ENCODE measurements at regions of chr1 and their contacts with region 1.

Region 1: DNA sequence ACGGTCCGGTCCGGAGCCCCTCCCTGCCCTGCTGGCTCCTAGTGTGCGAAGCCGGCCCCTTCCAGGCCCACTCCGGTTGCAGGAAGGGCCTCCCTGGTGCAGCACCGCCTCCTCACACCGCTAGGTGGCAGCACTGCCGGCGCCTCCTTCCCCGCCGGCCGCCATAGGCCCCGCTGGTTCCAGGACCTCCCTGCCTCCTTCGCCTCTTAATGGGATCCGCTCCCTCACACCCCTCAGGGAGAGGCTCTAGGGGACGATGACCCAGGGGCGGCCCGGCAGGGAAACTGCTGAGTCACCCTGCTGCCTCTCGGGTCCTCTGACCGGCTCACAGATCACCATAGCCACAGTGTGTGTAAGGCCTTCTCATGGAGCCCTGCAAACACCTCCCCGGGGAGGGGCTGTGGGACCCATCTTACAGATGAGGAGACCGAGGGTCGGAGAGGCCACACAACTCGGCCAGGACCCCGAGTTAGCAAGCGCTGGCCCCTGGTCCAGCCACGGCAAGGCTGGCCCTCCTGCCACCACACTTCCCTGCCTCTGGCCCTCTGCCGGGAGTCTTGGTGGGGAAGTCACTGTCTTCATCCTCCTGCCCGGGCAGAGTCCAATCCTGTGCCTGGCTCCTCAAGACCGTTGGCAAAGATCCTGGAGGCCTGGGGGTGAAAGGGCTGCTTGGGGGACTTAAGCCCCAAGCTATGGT is 1.6 kb upstream of the AJAP1 start:
- DNase-seq: peak in 8 of 9 donors; percentile 5 to 70 (median 50)
- ATAC-seq: peak; percentile 80
- H3K4me3 ChIP-seq: no peak overlapping the region
- H3K4me3 Mint-ChIP-seq: peak overlapping the region in 4 of 10 donors; percentile 16 to 71 (median 34)
- H3K27ac ChIP-seq: no peak overlapping the region
- H3K27ac Mint-ChIP-seq: no peak overlapping the region
- H3K4me1 ChIP-seq: peaks cover 0 to 6% of the 10 kb centered on the region in 2 donors
- H3K4me1 Mint-ChIP-seq: peaks cover 0 to 11% (median 9%) of the 10 kb centered on the region in 7 donors
- H3K27me3 ChIP-seq: no peaks in the 10 kb centered on the region
- H3K27me3 Mint-ChIP-seq: peaks cover 11 to 34% (median 19%) of the 10 kb centered on the region in 5 donors

Region 2: GRCh38 chr1:4000811-4001251 is 651.9 kb before region 1 on chr1:
- CTCF ChIA-PET with region 1: no interaction called
- POLR2A ChIA-PET with region 1: no interaction called
- intact Hi-C with region 1: no loop called
- DNase-seq: no peak
- ATAC-seq: no peak
- H3K4me3 ChIP-seq: no peak overlapping the region
- H3K4me3 Mint-ChIP-seq: no peak overlapping the region
- H3K27ac ChIP-seq: no peak overlapping the region
- H3K27ac Mint-ChIP-seq: no peak overlapping the region
- H3K4me1 ChIP-seq: no peaks in the 10 kb centered on the region
- H3K4me1 Mint-ChIP-seq: no peaks in the 10 kb centered on the region
- H3K27me3 ChIP-seq: no peaks in the 10 kb centered on the region
- H3K27me3 Mint-ChIP-seq: peaks cover 0 to 39% (median 29%) of the 10 kb centered on the region in 5 donors

Region 3: GRCh38 chr1:5597991-5598823 is 945.4 kb after region 1 on chr1:
- CTCF ChIA-PET with region 1: no interaction called
- POLR2A ChIA-PET with region 1: no interaction called
- intact Hi-C with region 1: loop called in 1 of 2 experiments (anchors 10 kb)
- DNase-seq: peak in 1 of 9 donors; percentile 3
- ATAC-seq: no peak
- H3K4me3 ChIP-seq: no peak overlapping the region
- H3K4me3 Mint-ChIP-seq: no peak overlapping the region
- H3K27ac ChIP-seq: no peak overlapping the region
- H3K27ac Mint-ChIP-seq: no peak overlapping the region
- H3K4me1 ChIP-seq: no peaks in the 10 kb centered on the region
- H3K4me1 Mint-ChIP-seq: peaks cover 0 to 3% (median 0%) of the 10 kb centered on the region in 7 donors
- H3K27me3 ChIP-seq: no peaks in the 10 kb centered on the region
- H3K27me3 Mint-ChIP-seq: peaks cover 0 to 51% (median 12%) of the 10 kb centered on the region in 5 donors

Measured in naive thymus-derived CD4-positive, alpha-beta T cell (primary cell).